Ascending aorta (tissue), 2 donors: ENCODE measurements at regions of chr16 and their contacts with region 1.

Region 1: DNA sequence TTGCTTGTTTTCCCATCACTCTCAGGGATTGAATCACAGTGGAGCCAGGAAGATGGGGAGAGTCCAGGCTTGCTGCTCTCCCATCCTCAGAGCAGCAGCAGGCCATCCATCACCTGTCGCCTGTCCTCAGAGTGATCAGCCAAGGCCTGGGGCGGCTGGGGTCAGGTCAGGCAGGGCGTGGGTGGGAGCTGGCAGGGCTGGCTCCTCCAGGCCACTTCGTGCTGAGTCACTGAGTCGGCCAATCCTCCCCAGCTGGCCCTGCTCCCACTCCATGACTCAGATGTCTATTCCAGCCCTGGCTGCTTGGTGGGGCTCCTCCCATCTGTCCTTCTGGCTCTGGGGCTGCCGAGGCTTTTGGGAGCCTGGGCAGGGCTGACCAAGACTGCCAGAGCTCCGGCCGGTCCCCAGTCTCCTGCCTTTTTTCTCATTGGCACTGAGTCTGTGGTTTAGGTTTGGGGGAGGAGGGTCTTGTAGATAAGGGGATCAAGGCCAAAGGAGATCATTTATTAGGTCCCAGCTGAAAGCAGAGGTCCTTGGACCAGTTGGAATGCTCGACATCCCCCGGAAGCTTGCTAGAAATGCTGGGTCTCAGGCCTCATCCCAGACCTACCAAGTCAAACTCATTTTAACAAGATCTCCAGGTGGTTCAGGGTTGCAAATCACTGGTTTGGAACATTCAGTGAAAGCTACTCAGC is 72.7 kb downstream of the ABCC1 start:
- DNase-seq: peak; percentile 89 to 99
- H3K4me3 ChIP-seq: peak overlapping the region in 1 of 2 donors; percentile 39
- H3K27ac ChIP-seq: peak overlapping the region; percentile 79 to 89
- H3K4me1 ChIP-seq: peaks cover 21 to 59% of the 10 kb centered on the region in 2 donors
- H3K27me3 ChIP-seq: no peaks in the 10 kb centered on the region
- CTCF ChIP-seq: no peak

Region 2: GRCh38 chr16:15857724-15858560 is 164.2 kb before region 1 on chr16:
- intact Hi-C with region 1: loop called (anchors 5 kb)
- DNase-seq: peak; percentile 25 to 86
- H3K4me3 ChIP-seq: peak overlapping the region; percentile 71 to 92
- H3K27ac ChIP-seq: peak overlapping the region; percentile 88 to 92
- H3K4me1 ChIP-seq: peaks cover 0 to 3% of the 10 kb centered on the region in 2 donors
- H3K27me3 ChIP-seq: no peaks in the 10 kb centered on the region
- CTCF ChIP-seq: peak in 1 of 3 experiments; percentile 1

Region 3: GRCh38 chr16:15888072-15888976 is 133.8 kb before region 1 on chr16 and contains the start of gene CEP20:
- intact Hi-C with region 1: loop called (anchors 2 kb)
- DNase-seq: peak; percentile 99 to 100
- H3K4me3 ChIP-seq: peak within 1 kb of the TSS; percentile 81 to 87
- H3K27ac ChIP-seq: peak within 1 kb of the TSS; percentile 79 to 93
- H3K4me1 ChIP-seq: peaks cover 0 to 11% of the 10 kb centered on the region in 2 donors
- H3K27me3 ChIP-seq: no peaks in the 10 kb centered on the region
- CTCF ChIP-seq: peak; percentile 11 to 55 (median 18)
- total RNA-seq, gene CEP20: 7.6 TPM

Region 4: DNA sequence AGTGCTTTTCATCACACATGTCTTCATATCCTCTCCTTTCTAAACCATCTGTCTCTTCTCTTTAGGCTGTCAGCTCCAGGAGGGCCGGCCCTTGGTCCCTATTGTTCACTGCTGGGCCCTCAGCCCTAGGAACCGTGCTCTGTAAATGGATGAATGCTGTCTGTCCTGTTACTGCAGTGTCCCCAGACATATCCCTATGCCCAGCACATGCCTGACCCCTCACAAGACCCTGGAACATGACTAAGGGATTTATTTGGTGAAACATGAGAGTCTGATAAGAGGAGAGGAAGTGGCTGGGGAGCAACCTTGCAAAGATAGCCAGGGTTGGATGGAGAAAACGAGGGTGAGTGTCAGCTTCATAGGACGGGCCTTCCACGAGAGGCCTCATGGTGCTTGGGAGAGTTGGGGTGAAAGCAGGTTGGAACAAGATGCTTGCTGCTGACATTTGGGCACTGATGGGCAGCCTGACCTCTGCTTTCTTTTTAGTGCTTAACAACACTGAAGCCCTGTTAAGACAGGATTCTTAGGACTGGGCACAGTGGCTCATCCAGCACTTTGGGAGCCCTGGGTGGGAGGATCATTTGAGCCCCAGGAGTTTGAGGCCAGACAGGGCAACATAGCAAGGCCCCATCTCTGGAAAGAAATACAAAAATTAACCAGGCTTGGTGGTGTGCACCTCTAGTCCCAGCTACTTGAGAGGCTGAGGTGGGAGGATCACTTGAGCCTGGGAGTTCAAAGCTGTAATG is 33.7 kb before region 1 on chr16:
- intact Hi-C with region 1: loop called (anchors 5 kb)
- DNase-seq: no peak
- H3K4me3 ChIP-seq: no peak overlapping the region
- H3K27ac ChIP-seq: peak overlapping the region; percentile 83
- H3K4me1 ChIP-seq: peaks cover 26 to 37% of the 10 kb centered on the region in 2 donors
- H3K27me3 ChIP-seq: no peaks in the 10 kb centered on the region
- CTCF ChIP-seq: no peak

Region 5: GRCh38 chr16:16042076-16042475 is 19.9 kb after region 1 on chr16:
- intact Hi-C with region 1: no loop called
- DNase-seq: no peak
- H3K4me3 ChIP-seq: no peak overlapping the region
- H3K27ac ChIP-seq: no peak overlapping the region
- H3K4me1 ChIP-seq: peaks cover 0 to 6% of the 10 kb centered on the region in 2 donors
- H3K27me3 ChIP-seq: no peaks in the 10 kb centered on the region
- CTCF ChIP-seq: no peak

Region 6: GRCh38 chr16:16062023-16062932 is 40.1 kb after region 1 on chr16:
- intact Hi-C with region 1: loop called (anchors 5 kb)
- DNase-seq: no peak
- H3K4me3 ChIP-seq: peak overlapping the region in 1 of 2 donors; percentile 4
- H3K27ac ChIP-seq: peak overlapping the region; percentile 71 to 75
- H3K4me1 ChIP-seq: peaks cover 5 to 25% of the 10 kb centered on the region in 2 donors
- H3K27me3 ChIP-seq: no peaks in the 10 kb centered on the region
- CTCF ChIP-seq: peak in 2 of 3 experiments; percentile 12 to 39